Caco-2 (cell line): ENCODE measurements at regions of chr2 and their contacts with region 1.

Region 1: GRCh38 chr2:85179541-85179940 is 46.3 kb downstream of the TCF7L1 start:
- DNase-seq: no peak
- H3K4me3 ChIP-seq: no peak overlapping the region
- H3K4me3 Mint-ChIP-seq: no peak overlapping the region
- H3K27ac Mint-ChIP-seq: no peak overlapping the region
- H3K4me1 ChIP-seq: peaks cover 14% of the 10 kb centered on the region; the same call in 1 of the 2 replicates
- H3K4me1 Mint-ChIP-seq: peaks cover 9% of the 10 kb centered on the region
- H3K27me3 ChIP-seq: no peaks in the 10 kb centered on the region
- H3K27me3 Mint-ChIP-seq: no peaks in the 10 kb centered on the region
- CTCF ChIP-seq: no peak

Region 2: GRCh38 chr2:85151520-85151919 is 28.0 kb before region 1 on chr2:
- CTCF ChIA-PET with region 1: no interaction called
- POLR2A ChIA-PET with region 1: no interaction called
- intact Hi-C with region 1: no loop called
- DNase-seq: no peak
- H3K4me3 ChIP-seq: no peak overlapping the region
- H3K4me3 Mint-ChIP-seq: no peak overlapping the region
- H3K27ac Mint-ChIP-seq: no peak overlapping the region
- H3K4me1 ChIP-seq: no peaks in the 10 kb centered on the region
- H3K4me1 Mint-ChIP-seq: peaks cover 10% of the 10 kb centered on the region
- H3K27me3 ChIP-seq: no peaks in the 10 kb centered on the region
- H3K27me3 Mint-ChIP-seq: no peaks in the 10 kb centered on the region
- CTCF ChIP-seq: no peak

Region 3: DNA sequence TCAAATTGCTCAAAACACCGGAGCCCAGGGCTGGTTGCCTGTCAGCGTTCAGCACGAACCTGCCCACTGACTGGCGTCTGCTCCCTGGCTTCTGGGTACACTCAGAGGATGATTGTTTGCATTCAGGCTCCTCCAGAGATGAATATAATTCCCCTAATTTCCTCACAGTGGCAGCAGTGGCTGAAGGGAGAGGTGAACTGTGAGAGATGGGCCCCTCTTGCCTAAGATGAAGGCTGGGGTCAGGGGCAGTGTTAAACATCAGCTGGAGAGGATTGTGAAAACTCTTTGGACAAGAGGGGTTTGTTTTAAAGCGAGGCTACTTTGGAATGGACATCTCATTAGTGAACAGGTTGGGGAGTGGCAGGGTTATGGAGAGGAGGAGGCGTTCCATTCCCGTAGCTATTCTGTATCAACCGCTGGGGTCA is 15.4 kb before region 1 on chr2:
- CTCF ChIA-PET with region 1: interaction called, 4 read pairs
- POLR2A ChIA-PET with region 1: no interaction called
- intact Hi-C with region 1: loop called (anchors 2 kb)
- DNase-seq: peak in 1 of 2 experiments; percentile 34
- H3K4me3 ChIP-seq: no peak overlapping the region
- H3K4me3 Mint-ChIP-seq: no peak overlapping the region
- H3K27ac Mint-ChIP-seq: no peak overlapping the region
- H3K4me1 ChIP-seq: no peaks in the 10 kb centered on the region
- H3K4me1 Mint-ChIP-seq: peaks cover 18% of the 10 kb centered on the region
- H3K27me3 ChIP-seq: no peaks in the 10 kb centered on the region
- H3K27me3 Mint-ChIP-seq: no peaks in the 10 kb centered on the region
- CTCF ChIP-seq: peak in 1 of 2 experiments; percentile 10